A673 (cell line): ENCODE measurements at regions of chr3 and their contacts with region 1.

Region 1: GRCh38 chr3:58008140-58009025 is at the start of gene FLNB:
- DNase-seq: peak; percentile 68
- H3K4me3 ChIP-seq: peak within 1 kb of the TSS; percentile 77
- H3K27ac ChIP-seq: peak within 1 kb of the TSS; percentile 63
- H3K4me1 ChIP-seq: no peaks in the 10 kb centered on the region
- H3K27me3 ChIP-seq: no peaks in the 10 kb centered on the region
- CTCF ChIP-seq: peak; percentile 61
- total RNA-seq, gene FLNB: 41.2 and 43.7 TPM in 2 replicates

Region 2: GRCh38 chr3:57961828-57962447 is 46.4 kb before region 1 on chr3:
- CTCF ChIA-PET with region 1: no interaction called
- POLR2A ChIA-PET with region 1: no interaction called
- intact Hi-C with region 1: no loop called
- DNase-seq: peak; percentile 37
- H3K4me3 ChIP-seq: no peak overlapping the region
- H3K27ac ChIP-seq: no peak overlapping the region
- H3K4me1 ChIP-seq: no peaks in the 10 kb centered on the region
- H3K27me3 ChIP-seq: no peaks in the 10 kb centered on the region
- CTCF ChIP-seq: peak; percentile 31; the same call in 1 of the 2 replicates

Region 3: DNA sequence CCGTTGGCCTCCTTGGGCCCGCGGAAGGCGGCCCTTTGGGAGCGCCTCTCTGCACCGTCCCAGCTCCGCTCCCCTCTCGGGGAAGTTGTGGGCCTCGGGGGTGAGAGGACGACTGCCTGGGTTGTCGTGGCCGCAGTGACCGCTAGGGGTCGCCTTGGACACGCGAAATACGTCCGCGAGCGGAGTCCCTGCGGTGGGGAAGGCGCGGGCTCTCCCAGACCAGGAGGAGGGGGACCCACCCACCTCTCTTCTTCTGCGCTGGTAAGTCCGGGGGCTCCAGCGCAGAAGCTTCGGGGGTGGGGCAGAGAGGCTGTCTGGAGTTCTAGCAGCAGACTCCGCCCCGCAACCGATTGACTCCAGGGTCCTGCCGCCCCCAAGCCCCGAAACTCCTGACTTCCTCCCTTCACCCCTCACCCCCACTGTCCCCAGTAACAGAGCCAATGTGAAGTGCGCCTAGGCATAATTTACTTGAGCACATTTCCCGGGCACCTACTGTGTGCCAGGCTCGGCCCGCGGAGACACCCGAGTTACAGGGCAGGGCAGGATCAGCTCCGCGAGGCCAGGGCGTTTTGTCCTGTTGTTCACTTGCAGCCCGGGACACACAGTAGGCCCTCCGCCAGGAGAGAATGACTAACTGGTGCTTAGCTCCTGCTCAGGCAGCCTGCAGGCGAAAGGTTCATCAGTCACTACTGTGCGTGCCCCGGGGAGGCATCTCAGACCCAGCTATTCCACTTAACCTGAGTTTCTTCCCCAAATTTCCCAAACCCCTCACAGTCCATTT is 169.6 kb after region 1 on chr3:
- CTCF ChIA-PET with region 1: no interaction called
- POLR2A ChIA-PET with region 1: no interaction called
- intact Hi-C with region 1: loop called (anchors 5 kb)
- DNase-seq: peak; percentile 87
- H3K4me3 ChIP-seq: peak overlapping the region; percentile 29
- H3K27ac ChIP-seq: no peak overlapping the region
- H3K4me1 ChIP-seq: no peaks in the 10 kb centered on the region
- H3K27me3 ChIP-seq: no peaks in the 10 kb centered on the region
- CTCF ChIP-seq: peak; percentile 80